ENCODE measurements at regions of chr11 and their contacts with region 1.

Region 1: GRCh38 chr11:117946842-117947526 is 17.8 kb upstream of the TMPRSS13 start:
- DNase-seq: peak; percentile 87 to 89
- H3K4me3 ChIP-seq: no peak overlapping the region
- H3K27ac ChIP-seq: no peak overlapping the region
- H3K4me1 ChIP-seq: peaks cover 12 to 18% of the 10 kb centered on the region in 2 donors
- H3K27me3 ChIP-seq: no peaks in the 10 kb centered on the region
- CTCF ChIP-seq: peak; percentile 92 to 98 (median 96)
- POLR2A ChIP-seq: no peak

Region 2: DNA sequence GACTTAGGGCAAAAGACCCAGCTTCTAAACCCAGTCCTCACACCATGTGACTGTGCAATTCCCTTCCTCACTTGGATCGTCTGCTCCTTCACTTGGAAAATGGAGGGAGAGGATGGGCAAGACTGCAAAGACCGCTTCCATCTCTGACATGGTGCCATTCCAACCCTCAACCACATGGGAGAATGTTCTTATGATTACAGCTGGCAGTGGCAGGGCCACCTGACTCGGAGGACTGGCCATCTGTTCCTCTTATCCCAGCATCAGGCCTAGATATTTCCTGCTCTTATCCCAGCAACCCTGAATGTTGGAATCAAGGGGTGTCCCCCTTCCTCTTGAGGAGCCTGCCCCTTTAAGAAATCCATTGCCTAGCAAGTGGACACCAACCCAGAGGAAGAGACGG is 165.4 kb before region 1 on chr11:
- intact Hi-C with region 1: no loop called
- DNase-seq: no peak
- H3K4me3 ChIP-seq: no peak overlapping the region
- H3K27ac ChIP-seq: no peak overlapping the region
- H3K4me1 ChIP-seq: no peaks in the 10 kb centered on the region
- H3K27me3 ChIP-seq: no peaks in the 10 kb centered on the region
- CTCF ChIP-seq: no peak
- POLR2A ChIP-seq: no peak

Region 3: DNA sequence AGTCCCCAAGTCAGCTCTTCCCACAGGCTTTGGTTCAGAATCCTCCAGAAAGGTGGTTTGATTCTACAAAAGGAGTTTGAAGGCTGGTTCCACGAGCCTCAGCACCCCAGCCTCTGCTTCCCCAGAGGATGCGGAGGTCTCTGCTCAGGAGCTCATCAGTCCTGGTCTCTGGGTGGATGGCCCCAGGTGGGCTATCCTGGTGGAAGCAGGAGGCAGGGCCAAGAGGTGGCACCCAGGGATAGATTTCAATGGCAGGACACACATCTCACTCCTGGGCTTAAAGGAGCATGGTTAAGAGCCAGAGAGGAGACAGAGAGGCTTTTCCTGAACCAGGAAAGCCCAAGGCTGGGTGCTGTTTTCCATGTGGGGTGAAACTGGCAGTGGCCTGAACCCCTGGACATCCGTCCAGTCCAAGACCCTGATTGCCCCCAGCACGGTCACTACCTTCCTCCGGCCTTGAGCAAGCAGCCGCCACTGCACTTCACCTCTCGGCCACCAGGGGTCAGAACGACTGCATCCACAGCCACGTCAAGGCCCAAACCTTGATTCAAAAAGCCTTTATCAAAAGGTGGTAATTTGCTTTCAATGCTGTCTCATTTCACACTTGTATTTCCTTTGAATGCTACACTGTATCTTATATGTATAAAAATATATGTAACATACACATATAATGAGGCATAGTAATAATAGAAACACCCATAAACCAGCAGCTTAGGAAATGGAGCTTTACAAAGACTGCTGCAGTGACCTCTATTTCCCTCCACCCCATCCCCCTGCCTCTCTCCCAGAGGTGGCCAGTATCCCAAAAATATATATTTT is 103.1 kb before region 1 on chr11:
- intact Hi-C with region 1: loop called (anchors 2 kb)
- DNase-seq: peak; percentile 81 to 82
- H3K4me3 ChIP-seq: no peak overlapping the region
- H3K27ac ChIP-seq: no peak overlapping the region
- H3K4me1 ChIP-seq: no peaks in the 10 kb centered on the region
- H3K27me3 ChIP-seq: no peaks in the 10 kb centered on the region
- CTCF ChIP-seq: peak; percentile 95 to 98 (median 96)
- POLR2A ChIP-seq: no peak